ENCODE measurements at regions of chr2 and their contacts with region 1.

Region 1: GRCh38 chr2:101831351-101831865 is 133.9 kb downstream of the MAP4K4 start:
- DNase-seq: peak; percentile 50 to 83 (median 72)
- ATAC-seq: peak; percentile 90 to 98 (median 95)
- H3K4me3 ChIP-seq: no peak overlapping the region
- H3K27ac ChIP-seq: peak overlapping the region; percentile 41 to 74 (median 69)
- H3K4me1 ChIP-seq: peaks cover 0 to 16% (median 7%) of the 10 kb centered on the region in 4 donors
- H3K27me3 ChIP-seq: no peaks in the 10 kb centered on the region
- CTCF ChIP-seq: peak; percentile 74 to 85 (median 79)
- POLR2A ChIP-seq: no peak

Region 2: GRCh38 chr2:101419096-101419663 is 412.2 kb before region 1 on chr2:
- intact Hi-C with region 1: loop called in 1 of 2 experiments (anchors 5 kb)
- DNase-seq: no peak
- ATAC-seq: peak; percentile 75 to 92 (median 82)
- H3K4me3 ChIP-seq: no peak overlapping the region
- H3K27ac ChIP-seq: no peak overlapping the region
- H3K4me1 ChIP-seq: no peaks in the 10 kb centered on the region
- H3K27me3 ChIP-seq: no peaks in the 10 kb centered on the region
- CTCF ChIP-seq: peak; percentile 70 to 82 (median 74)
- POLR2A ChIP-seq: no peak

Region 3: DNA sequence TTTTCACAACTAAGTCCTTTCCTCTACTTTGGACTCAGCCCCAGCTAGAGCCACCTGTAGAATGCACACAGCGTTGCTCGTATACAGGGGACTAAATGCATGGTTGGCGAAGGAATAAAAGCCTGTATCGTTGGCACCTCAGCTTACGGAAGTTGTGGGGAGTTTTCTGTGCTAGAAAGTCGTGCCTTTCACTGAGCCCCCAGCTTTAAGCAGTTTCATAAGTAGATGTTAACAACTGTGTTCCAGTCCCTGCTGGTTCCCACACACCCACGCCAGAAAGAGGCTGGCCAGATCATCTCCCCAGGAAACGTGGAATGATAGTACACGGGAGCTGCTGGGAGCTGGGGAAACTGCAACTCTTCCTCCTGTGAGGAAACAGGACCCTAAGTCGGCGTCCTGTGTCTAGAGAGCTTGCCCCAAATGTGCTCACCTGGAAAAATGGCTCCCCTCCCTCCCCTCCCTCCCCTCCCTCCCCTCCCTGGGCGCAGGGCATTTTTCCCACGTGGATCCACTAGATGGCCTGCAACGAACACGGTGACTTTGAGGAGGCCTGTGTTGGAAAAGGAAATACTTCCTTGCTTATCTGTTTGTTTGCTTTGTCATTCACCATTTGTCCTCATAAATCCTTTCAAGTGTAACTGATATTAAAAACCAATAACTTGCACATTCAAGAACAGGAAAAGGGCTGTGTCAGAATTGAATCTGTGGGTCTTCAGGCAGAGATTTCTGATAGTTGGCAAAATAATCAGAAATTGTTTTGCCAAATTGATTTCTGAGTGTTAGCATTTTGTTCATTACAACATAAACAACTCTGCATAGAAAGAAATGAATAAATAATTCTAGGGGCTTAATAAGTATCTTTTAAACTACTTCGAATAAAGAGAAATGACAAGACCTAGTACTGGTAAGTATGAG is 312.6 kb before region 1 on chr2:
- intact Hi-C with region 1: loop called in 1 of 2 experiments (anchors 10 kb)
- DNase-seq: peak; percentile 58 to 71 (median 64)
- ATAC-seq: peak; percentile 82 to 95 (median 93)
- H3K4me3 ChIP-seq: peak overlapping the region in 1 of 3 donors; percentile 38
- H3K27ac ChIP-seq: no peak overlapping the region
- H3K4me1 ChIP-seq: peaks cover 0 to 12% (median 2%) of the 10 kb centered on the region in 4 donors
- H3K27me3 ChIP-seq: no peaks in the 10 kb centered on the region
- CTCF ChIP-seq: peak; percentile 28 to 52 (median 49)
- POLR2A ChIP-seq: no peak

Region 4: DNA sequence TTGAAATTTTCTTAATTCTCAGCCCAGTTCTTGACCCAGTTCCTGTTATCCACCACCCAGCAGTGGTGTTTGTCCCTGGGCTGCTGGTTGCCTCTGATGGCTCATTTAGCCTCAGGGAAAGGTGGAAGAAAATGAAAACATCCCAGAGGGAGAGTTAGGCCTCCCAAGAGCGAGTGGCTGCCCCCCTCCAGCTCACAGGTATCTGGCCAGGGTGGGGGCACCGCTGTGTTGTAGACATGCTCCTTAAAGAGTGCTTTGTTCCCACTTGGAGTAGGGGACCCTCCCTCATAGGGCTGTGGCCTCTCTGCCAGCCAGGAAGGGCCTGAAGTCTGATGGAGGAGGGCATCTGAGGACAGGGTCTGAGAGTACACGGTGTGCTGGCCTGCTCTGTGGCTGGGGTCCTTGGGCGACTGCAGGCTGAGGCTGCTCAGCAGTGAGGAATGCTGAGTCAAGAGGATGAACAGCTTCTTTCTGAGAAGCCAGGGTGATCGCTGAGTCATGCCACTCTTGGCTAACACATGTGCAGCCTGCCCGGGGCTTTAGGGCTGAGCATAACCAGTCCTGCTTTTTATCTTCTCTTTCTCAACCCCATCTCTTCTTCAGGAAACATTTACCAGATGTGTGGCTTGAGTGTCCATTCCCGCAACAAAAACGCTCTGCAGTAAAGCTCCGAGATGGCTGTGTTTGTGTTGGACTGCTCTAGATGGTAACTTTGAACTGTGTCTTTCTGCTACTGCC is 232.7 kb after region 1 on chr2:
- intact Hi-C with region 1: no loop called
- DNase-seq: peak; percentile 77 to 84 (median 81)
- ATAC-seq: peak; percentile 69 to 84 (median 80)
- H3K4me3 ChIP-seq: no peak overlapping the region
- H3K27ac ChIP-seq: peak overlapping the region; percentile 69 to 94 (median 75)
- H3K4me1 ChIP-seq: peaks cover 0 to 53% (median 27%) of the 10 kb centered on the region in 4 donors
- H3K27me3 ChIP-seq: no peaks in the 10 kb centered on the region
- CTCF ChIP-seq: no peak
- POLR2A ChIP-seq: no peak

Region 5: GRCh38 chr2:102137138-102137537 is 305.7 kb after region 1 on chr2:
- intact Hi-C with region 1: no loop called
- DNase-seq: no peak
- ATAC-seq: no peak
- H3K4me3 ChIP-seq: no peak overlapping the region
- H3K27ac ChIP-seq: no peak overlapping the region
- H3K4me1 ChIP-seq: peaks cover 0 to 10% (median 0%) of the 10 kb centered on the region in 4 donors
- H3K27me3 ChIP-seq: no peaks in the 10 kb centered on the region
- CTCF ChIP-seq: no peak
- POLR2A ChIP-seq: no peak

Region 6: GRCh38 chr2:103144837-103145236 is 1313.4 kb after region 1 on chr2:
- intact Hi-C with region 1: no loop called
- DNase-seq: no peak
- ATAC-seq: no peak
- H3K4me3 ChIP-seq: no peak overlapping the region
- H3K27ac ChIP-seq: no peak overlapping the region
- H3K4me1 ChIP-seq: no peaks in the 10 kb centered on the region
- H3K27me3 ChIP-seq: no peaks in the 10 kb centered on the region
- CTCF ChIP-seq: no peak
- POLR2A ChIP-seq: no peak

Measured in right lobe of liver (tissue), 6 donors.